ENCODE measurements at regions of chr19 and their contacts with region 1.

Region 1: DNA sequence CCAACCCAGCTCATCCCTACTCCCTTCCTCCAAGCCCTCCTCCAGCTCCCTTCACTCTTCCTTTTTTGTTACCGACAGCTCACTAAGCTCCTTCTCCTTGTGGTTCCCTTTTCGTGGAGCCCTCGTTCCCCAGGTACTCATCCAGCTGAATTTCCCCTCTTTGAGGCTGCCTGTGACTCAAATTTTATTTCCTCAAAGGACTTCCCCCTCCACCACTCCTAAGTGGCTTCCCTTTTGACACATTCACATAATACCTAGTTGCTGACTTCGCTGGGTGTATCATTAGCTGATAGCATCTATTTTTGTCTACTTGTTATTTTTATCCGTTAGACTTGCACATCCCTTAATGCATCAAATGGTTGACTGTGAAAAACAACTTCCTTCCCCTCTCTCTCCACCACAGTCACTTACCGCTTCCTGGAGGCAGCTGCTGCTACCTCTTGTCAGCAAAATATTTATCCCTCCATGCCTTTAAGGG is 14.5 kb downstream of the FFAR2 start:
- DNase-seq: peak; percentile 86
- ATAC-seq: peak; percentile 93
- H3K4me3 Mint-ChIP-seq: peak overlapping the region; percentile 59
- H3K27ac Mint-ChIP-seq: peak overlapping the region; percentile 93
- H3K4me1 Mint-ChIP-seq: peaks cover 36% of the 10 kb centered on the region
- H3K27me3 Mint-ChIP-seq: peaks cover 11% of the 10 kb centered on the region

Region 2: GRCh38 chr19:35352448-35353304 is 109.8 kb before region 1 on chr19:
- CTCF ChIA-PET with region 1: interaction called, 73 read pairs
- POLR2A ChIA-PET with region 1: interaction called, 5 read pairs
- DNase-seq: peak; percentile 83
- ATAC-seq: peak; percentile 74
- H3K4me3 Mint-ChIP-seq: no peak overlapping the region
- H3K27ac Mint-ChIP-seq: no peak overlapping the region
- H3K4me1 Mint-ChIP-seq: peaks cover 17% of the 10 kb centered on the region
- H3K27me3 Mint-ChIP-seq: peaks cover 3% of the 10 kb centered on the region

Region 3: DNA sequence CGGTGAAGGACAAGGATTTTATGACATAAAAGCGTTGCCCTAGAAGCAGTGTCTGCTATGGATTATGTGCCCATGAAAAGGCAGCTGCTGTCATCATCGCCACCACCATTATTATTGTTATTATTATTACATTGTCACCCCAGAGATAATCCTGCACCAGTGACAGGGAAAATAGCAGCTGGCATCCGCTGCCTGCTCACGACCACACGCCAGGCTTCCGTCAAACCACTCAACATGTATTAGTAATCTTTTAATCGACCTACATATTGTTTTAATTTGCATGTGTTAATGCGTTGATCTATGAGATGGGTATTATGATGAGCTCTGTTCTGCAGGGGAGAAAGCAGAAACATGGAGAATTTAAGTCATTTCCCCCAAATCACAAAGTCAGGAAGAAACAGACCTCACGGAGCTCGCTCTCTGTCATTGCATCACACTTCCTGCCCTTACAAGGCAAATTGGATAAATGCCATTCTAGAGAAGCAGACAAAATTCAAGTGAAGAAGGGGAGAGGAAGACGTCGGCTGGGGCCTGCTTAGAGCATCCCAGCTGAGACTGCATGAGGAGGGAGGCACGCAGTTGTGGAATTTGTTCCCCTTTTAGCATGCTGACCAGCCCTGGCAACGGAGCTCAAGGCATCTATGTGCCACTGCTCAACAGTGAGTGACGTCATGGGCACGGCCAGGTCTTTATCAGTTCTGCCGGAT is 104.5 kb before region 1 on chr19 and contains the start of gene FFAR3:
- CTCF ChIA-PET with region 1: interaction called, 73 read pairs
- POLR2A ChIA-PET with region 1: interaction called, 5 read pairs
- DNase-seq: no peak
- ATAC-seq: no peak
- H3K4me3 Mint-ChIP-seq: no peak within 1 kb of the TSS
- H3K27ac Mint-ChIP-seq: no peak within 1 kb of the TSS
- H3K4me1 Mint-ChIP-seq: peaks cover 11% of the 10 kb centered on the region
- H3K27me3 Mint-ChIP-seq: peaks cover 3% of the 10 kb centered on the region
- total RNA-seq, gene FFAR3: not detected

Region 4: DNA sequence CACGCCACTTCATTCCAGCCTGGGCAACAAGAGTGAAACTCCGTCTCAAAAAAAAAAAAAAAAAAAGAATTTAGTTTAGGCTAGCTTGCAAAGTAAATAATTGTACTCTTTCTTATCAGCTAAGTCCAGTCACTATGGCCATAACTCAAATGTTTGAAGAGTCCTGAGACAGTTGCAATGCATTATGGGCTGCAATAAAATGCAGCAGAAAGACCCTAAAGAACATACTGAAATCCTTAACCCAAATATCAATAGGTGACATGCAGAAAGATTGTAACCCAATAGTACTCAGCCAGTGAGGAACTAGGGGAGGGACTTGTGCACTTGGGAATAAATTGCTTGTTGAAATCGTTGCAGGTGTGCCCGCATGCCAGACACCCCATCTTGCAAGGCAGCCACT is 35.3 kb before region 1 on chr19:
- CTCF ChIA-PET with region 1: no interaction called
- POLR2A ChIA-PET with region 1: no interaction called
- DNase-seq: no peak
- ATAC-seq: no peak
- H3K4me3 Mint-ChIP-seq: no peak overlapping the region
- H3K27ac Mint-ChIP-seq: no peak overlapping the region
- H3K4me1 Mint-ChIP-seq: peaks cover 21% of the 10 kb centered on the region
- H3K27me3 Mint-ChIP-seq: peaks cover 2% of the 10 kb centered on the region

Region 5: DNA sequence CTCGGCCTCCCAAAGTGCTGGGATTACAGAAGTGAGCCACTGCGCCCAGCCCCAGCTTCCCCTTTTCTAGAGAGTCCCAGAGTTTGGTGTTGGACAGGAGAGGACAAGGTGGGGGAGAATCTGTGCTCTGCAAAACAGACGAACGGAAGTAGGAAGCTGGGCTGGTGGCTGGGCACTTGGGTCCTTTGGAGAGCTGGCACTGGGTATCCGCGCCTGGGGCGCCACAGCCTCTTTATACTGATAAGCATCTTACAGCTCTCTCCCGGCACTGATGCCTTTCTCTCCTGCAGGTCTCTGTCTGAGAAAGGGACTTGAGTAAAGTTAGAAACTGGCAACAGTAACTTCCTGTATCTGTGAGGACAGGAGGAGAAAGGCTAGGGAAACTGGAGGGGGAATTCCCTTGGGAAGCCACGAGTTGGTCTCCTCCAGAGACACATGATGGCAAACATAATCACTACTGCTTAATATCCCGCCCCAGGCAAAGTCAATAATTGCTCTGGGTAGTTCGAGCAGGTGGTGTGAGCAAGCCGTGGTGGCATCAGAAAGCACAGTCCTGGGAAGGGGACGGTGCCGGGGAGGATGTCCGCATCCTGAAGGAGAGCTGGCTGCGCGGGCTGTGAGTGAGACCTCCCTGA is 13.3 kb before region 1 on chr19:
- CTCF ChIA-PET with region 1: interaction called, 13 read pairs
- POLR2A ChIA-PET with region 1: no interaction called
- DNase-seq: no peak
- ATAC-seq: no peak
- H3K4me3 Mint-ChIP-seq: no peak overlapping the region
- H3K27ac Mint-ChIP-seq: no peak overlapping the region
- H3K4me1 Mint-ChIP-seq: peaks cover 55% of the 10 kb centered on the region
- H3K27me3 Mint-ChIP-seq: peaks cover 43% of the 10 kb centered on the region